ENCODE measurements at regions of chr20 and their contacts with region 1.

Region 1: GRCh38 chr20:50987592-50988210 is 29.1 kb downstream of the MOCS3 start:
- DNase-seq: peak; percentile 19 to 86 (median 41)
- ATAC-seq: peak; percentile 97
- H3K4me3 ChIP-seq: no peak overlapping the region
- H3K4me3 Mint-ChIP-seq: no peak overlapping the region
- H3K27ac ChIP-seq: no peak overlapping the region
- H3K27ac Mint-ChIP-seq: no peak overlapping the region
- H3K4me1 ChIP-seq: no peaks in the 10 kb centered on the region
- H3K4me1 Mint-ChIP-seq: peaks cover 4% of the 10 kb centered on the region
- H3K27me3 ChIP-seq: peaks cover 5 to 12% of the 10 kb centered on the region in 2 experiments
- H3K27me3 Mint-ChIP-seq: peaks cover 42% of the 10 kb centered on the region
- CTCF ChIP-seq: peak; percentile 95

Region 2: DNA sequence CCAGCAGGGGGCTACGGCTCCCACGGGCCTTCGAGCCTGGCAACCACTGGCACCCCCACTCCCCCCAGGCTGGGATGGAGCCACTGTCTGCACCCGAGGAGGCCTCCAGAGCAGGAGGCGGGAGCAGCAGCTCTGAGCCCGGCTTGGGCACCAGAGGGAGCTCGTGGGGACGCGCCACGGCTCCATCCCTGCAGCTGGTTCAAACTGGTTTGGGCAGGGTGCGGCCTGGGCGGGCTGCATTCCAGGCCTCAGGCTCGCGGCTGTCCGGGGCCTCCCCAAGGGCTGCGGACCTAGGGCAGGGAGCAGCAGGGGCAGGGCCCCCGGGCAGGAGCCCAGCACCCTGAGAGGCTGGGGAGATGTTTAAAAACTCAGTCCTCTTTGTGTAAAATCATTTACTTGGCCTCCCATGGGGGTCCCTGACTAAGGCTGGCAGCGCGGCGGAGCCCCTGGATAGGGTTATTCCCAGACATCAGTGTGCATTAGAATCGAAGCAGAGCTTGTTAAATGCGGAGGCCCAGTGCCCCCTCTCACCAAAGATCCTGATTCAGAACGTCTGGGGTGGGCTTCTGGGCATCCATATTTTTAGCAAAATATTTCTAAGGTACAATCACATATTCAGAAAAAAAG is 196.9 kb before region 1 on chr20:
- CTCF ChIA-PET with region 1: interaction called, 11 read pairs
- POLR2A ChIA-PET with region 1: interaction called, 5 read pairs
- intact Hi-C with region 1: no loop called
- DNase-seq: peak; percentile 63 to 87 (median 78)
- ATAC-seq: peak; percentile 68
- H3K4me3 ChIP-seq: peak overlapping the region; percentile 25
- H3K4me3 Mint-ChIP-seq: no peak overlapping the region
- H3K27ac ChIP-seq: peak overlapping the region in 1 of 2 donors; percentile 71
- H3K27ac Mint-ChIP-seq: peak overlapping the region; percentile 44
- H3K4me1 ChIP-seq: peaks cover 27% of the 10 kb centered on the region
- H3K4me1 Mint-ChIP-seq: peaks cover 10% of the 10 kb centered on the region
- H3K27me3 ChIP-seq: no peaks in the 10 kb centered on the region
- H3K27me3 Mint-ChIP-seq: no peaks in the 10 kb centered on the region
- CTCF ChIP-seq: peak; percentile 81

Region 3: DNA sequence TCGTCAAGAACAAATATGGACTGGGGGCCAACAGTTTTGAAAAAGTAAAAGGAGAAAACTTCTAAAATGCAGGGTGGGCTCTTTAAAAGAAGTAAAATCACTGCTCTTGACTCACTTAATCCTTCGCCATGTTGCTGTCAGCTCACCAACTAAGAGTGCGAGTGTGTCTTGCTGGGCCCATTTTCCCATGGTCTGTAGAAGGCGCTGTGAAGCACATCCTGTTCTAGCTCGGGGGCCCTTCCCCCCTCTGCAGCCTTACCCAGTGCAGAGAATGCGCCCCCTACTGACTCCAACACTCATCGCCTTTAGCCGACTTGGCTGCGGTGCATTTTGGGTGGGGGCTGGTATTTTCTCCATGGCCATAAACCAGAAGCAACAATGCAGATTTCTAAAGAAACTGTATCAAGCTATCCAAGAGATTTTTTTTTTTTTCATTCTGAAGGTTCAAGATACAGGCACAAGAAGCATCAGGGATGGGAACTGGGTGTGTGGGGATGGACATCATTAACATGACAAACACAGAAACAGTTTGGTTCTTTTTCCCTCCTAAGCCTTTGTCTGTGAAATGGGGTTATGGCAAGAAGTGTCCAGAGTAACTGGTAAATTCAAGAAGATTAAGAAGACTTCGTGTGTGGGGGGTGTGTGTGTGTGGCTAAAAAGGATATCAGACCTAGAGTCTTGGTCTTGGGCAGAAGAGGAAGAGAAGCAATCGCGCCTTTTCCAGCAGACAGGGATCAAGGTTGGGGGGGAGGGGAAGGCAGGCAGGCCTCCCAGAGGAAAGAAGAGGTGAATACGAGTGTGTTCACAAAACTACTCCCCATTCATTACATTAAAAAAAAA is 58.2 kb before region 1 on chr20:
- CTCF ChIA-PET with region 1: no interaction called
- POLR2A ChIA-PET with region 1: no interaction called
- intact Hi-C with region 1: no loop called
- DNase-seq: peak; percentile 76 to 97 (median 90)
- ATAC-seq: peak; percentile 76
- H3K4me3 ChIP-seq: peak overlapping the region; percentile 66
- H3K4me3 Mint-ChIP-seq: peak overlapping the region; percentile 93
- H3K27ac ChIP-seq: peak overlapping the region; percentile 2 to 37
- H3K27ac Mint-ChIP-seq: peak overlapping the region; percentile 98
- H3K4me1 ChIP-seq: peaks cover 37% of the 10 kb centered on the region
- H3K4me1 Mint-ChIP-seq: peaks cover 69% of the 10 kb centered on the region
- H3K27me3 ChIP-seq: no peaks in the 10 kb centered on the region
- H3K27me3 Mint-ChIP-seq: no peaks in the 10 kb centered on the region
- CTCF ChIP-seq: peak; percentile 90

Region 4: DNA sequence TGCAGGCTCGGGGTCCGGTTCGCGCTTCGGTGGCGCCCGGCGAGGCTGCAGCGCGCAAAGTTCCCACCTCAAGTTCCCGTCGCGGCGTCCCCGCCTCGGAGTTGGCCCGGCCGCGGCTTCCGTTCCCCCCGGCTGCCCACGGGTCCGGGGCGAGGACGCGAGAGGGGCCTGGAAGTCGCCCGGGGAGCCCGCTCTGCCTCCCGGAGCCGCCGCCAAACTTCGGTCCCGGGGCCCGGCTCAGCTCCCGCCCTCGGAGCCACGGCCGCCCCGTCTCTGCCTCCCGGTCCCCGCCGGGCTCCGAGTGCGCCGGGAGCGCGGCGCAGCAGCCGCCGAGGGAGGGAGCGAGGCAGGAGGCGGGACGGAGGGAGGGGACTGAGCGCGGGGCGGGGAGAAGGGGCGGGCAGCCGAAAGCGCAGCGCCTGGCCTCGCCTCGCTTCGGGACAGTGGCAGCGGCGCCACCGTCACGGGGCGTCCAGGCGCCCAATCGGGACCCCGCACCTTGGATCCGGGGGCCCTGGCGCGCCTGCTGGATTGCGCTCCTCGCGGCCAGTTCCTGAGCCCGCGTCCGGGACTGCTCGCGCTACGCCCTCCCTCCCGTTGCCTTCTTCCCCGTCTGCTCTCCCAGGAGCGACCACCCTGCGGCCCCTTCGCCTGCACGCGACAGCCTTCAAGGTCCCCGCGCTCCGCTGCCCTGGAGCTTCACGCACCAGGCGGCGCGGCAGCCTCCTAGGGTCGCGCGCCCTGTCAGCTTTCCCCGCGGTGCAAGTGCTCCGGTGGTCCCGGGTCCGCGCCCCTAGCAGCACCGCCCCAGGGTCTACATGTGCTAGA is 35.3 kb after region 1 on chr20 and contains the start of gene KCNG1:
- CTCF ChIA-PET with region 1: no interaction called
- POLR2A ChIA-PET with region 1: no interaction called
- intact Hi-C with region 1: no loop called
- DNase-seq: peak in 6 of 14 experiments; percentile 5 to 47 (median 24)
- ATAC-seq: peak; percentile 56
- H3K4me3 ChIP-seq: no peak within 1 kb of the TSS
- H3K4me3 Mint-ChIP-seq: peak within 1 kb of the TSS; percentile 77
- H3K27ac ChIP-seq: no peak within 1 kb of the TSS
- H3K27ac Mint-ChIP-seq: no peak within 1 kb of the TSS
- H3K4me1 ChIP-seq: peaks cover 10% of the 10 kb centered on the region
- H3K4me1 Mint-ChIP-seq: peaks cover 13% of the 10 kb centered on the region
- H3K27me3 ChIP-seq: peaks cover 25 to 52% of the 10 kb centered on the region in 2 experiments
- H3K27me3 Mint-ChIP-seq: peaks cover 63% of the 10 kb centered on the region
- CTCF ChIP-seq: no peak
- total RNA-seq, gene KCNG1: not detected

Region 5: DNA sequence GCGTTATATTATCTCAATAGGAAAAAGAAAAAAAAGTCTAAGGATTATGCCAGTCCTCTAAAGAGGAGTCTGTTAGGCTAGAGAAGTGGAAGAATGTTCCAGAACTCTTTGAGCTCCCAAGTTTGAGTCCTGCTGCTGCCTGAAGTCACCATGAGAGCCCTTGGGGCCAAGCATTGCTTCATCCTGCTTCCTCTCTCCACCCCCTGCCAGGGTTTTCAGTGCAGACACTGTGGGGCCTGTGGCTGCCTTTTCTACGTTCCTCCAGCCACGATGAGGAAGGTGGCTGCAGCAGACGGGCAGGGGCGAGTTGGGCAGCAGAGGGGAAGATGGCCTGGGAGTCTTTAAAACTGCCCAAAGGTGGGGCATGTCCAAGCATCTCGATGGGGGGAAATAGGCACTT is 249.6 kb after region 1 on chr20:
- CTCF ChIA-PET with region 1: no interaction called
- POLR2A ChIA-PET with region 1: no interaction called
- intact Hi-C with region 1: no loop called
- DNase-seq: no peak
- ATAC-seq: no peak
- H3K4me3 ChIP-seq: no peak overlapping the region
- H3K4me3 Mint-ChIP-seq: no peak overlapping the region
- H3K27ac ChIP-seq: no peak overlapping the region
- H3K27ac Mint-ChIP-seq: no peak overlapping the region
- H3K4me1 ChIP-seq: no peaks in the 10 kb centered on the region
- H3K4me1 Mint-ChIP-seq: no peaks in the 10 kb centered on the region
- H3K27me3 ChIP-seq: peaks cover 4 to 5% of the 10 kb centered on the region in 2 experiments
- H3K27me3 Mint-ChIP-seq: peaks cover 35% of the 10 kb centered on the region
- CTCF ChIP-seq: no peak

Region 6: GRCh38 chr20:51326201-51326819 is 338.6 kb after region 1 on chr20:
- CTCF ChIA-PET with region 1: interaction called, 8 read pairs
- POLR2A ChIA-PET with region 1: interaction called, 3 read pairs
- intact Hi-C with region 1: loop called (anchors 1 kb)
- DNase-seq: peak in 12 of 14 experiments; percentile 13 to 72 (median 31)
- ATAC-seq: peak; percentile 39
- H3K4me3 ChIP-seq: no peak overlapping the region
- H3K4me3 Mint-ChIP-seq: no peak overlapping the region
- H3K27ac ChIP-seq: no peak overlapping the region
- H3K27ac Mint-ChIP-seq: no peak overlapping the region
- H3K4me1 ChIP-seq: no peaks in the 10 kb centered on the region
- H3K4me1 Mint-ChIP-seq: no peaks in the 10 kb centered on the region
- H3K27me3 ChIP-seq: peaks cover 0 to 8% of the 10 kb centered on the region in 2 experiments
- H3K27me3 Mint-ChIP-seq: peaks cover 4% of the 10 kb centered on the region
- CTCF ChIP-seq: peak; percentile 81

Region 7: DNA sequence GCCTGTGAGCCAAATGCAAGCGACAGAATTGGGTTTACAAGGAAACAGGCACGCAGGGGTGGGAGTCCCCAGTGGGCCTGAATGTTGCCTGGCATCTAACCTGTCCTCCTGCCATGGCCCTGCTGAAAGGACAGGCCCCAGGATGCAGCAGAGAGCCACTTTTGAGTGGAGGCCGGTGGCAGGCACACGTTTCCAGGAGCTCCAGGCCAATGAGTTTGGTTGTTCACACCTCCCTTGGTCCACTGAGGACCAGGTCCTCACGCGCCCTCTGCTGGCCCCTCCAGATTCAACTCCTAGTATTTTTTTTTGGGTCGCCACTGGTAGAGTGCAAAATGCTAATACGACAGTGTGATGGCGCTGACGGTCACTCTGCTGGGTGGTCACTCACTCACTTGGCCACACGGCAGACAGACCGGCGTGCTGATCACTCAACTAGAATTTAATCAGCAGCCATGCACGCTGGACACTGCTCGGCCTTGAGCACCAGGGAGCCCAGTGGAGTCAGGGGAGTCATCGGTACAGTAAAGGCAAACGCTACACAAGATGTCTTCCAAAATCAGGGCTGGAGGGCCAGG is 636.5 kb after region 1 on chr20:
- CTCF ChIA-PET with region 1: interaction called, 4 read pairs
- POLR2A ChIA-PET with region 1: interaction called, 3 read pairs
- intact Hi-C with region 1: loop called in 1 of 2 experiments (anchors 2 kb)
- DNase-seq: peak; percentile 35 to 73 (median 54)
- ATAC-seq: peak; percentile 68
- H3K4me3 ChIP-seq: no peak overlapping the region
- H3K4me3 Mint-ChIP-seq: no peak overlapping the region
- H3K27ac ChIP-seq: no peak overlapping the region
- H3K27ac Mint-ChIP-seq: no peak overlapping the region
- H3K4me1 ChIP-seq: no peaks in the 10 kb centered on the region
- H3K4me1 Mint-ChIP-seq: no peaks in the 10 kb centered on the region
- H3K27me3 ChIP-seq: no peaks in the 10 kb centered on the region
- H3K27me3 Mint-ChIP-seq: peaks cover 5% of the 10 kb centered on the region
- CTCF ChIP-seq: peak; percentile 74

Region 8: GRCh38 chr20:52150440-52151258 is 1162.9 kb after region 1 on chr20:
- CTCF ChIA-PET with region 1: no interaction called
- POLR2A ChIA-PET with region 1: no interaction called
- intact Hi-C with region 1: loop called (anchors 2 to 5 kb)
- DNase-seq: peak in 5 of 14 experiments; percentile 3 to 58 (median 41)
- ATAC-seq: peak; percentile 39
- H3K4me3 ChIP-seq: no peak overlapping the region
- H3K4me3 Mint-ChIP-seq: no peak overlapping the region
- H3K27ac ChIP-seq: no peak overlapping the region
- H3K27ac Mint-ChIP-seq: no peak overlapping the region
- H3K4me1 ChIP-seq: no peaks in the 10 kb centered on the region
- H3K4me1 Mint-ChIP-seq: no peaks in the 10 kb centered on the region
- H3K27me3 ChIP-seq: no peaks in the 10 kb centered on the region
- H3K27me3 Mint-ChIP-seq: no peaks in the 10 kb centered on the region
- CTCF ChIP-seq: peak; percentile 98